SK-N-SH (cell line): ENCODE measurements at regions of chr18 and their contacts with region 1.

Region 1: DNA sequence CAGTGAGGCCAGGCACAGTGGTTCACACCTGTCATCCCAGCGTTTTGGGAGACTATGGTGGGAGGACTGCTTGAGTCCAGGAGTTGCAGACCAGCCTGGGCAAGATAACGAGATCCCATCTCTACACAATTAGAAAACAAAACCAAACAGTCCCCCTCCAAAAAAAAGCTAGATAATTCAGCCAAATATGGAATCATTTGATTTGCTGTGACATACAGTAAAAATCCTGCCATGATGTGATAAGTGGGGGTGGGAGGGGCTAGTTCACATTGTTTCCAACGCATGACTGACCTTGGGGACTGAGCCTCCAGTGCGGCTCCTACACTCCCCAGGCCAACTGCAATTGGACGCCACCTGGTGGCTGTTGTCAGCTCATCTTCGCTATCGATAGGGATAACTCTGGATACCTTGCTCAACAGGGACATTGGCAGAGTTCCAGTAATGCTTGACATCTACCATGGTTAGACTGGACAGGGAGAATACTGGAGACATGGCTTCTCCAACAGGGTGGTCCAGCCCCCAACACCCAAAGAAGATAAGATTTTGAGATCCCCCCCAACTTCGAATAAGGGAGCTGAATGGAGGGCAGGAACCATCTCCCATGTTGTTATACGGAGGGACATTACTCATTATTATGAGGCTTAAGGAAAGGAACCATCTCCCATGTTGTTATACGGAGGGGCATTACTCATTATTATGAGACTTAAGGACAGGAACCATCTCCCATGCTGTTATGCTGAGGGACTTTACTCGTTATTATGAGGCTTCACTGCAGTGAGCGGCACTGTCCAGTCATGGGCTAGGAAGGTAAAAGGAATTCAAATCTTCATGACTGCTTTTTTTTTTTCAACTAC is 135.9 kb downstream of the TGIF1 start:
- DNase-seq: peak; percentile 73
- H3K4me3 ChIP-seq: no peak overlapping the region
- H3K27ac ChIP-seq: peak overlapping the region in 1 of 2 experiments; percentile 24; a peak in 1 of 4 replicates
- H3K4me1 ChIP-seq: peaks cover 0 to 11% of the 10 kb centered on the region in 2 experiments; a peak in 1 of 4 replicates
- H3K27me3 ChIP-seq: no peaks in the 10 kb centered on the region
- CTCF ChIP-seq: peak; percentile 76
- EP300 ChIP-seq: no peak
- RAD21 ChIP-seq: peak; percentile 80

Region 2: GRCh38 chr18:3281456-3282400 is 304.2 kb before region 1 on chr18:
- CTCF ChIA-PET with region 1: interaction called, 21 read pairs
- POLR2A ChIA-PET with region 1: interaction called, 4 read pairs
- DNase-seq: peak; percentile 59
- H3K4me3 ChIP-seq: no peak overlapping the region; a peak in 1 of 4 replicates
- H3K27ac ChIP-seq: peak overlapping the region; percentile 30 to 53; a peak in 3 of 4 replicates
- H3K4me1 ChIP-seq: peaks cover 4 to 25% of the 10 kb centered on the region in 2 experiments; a peak in 3 of 4 replicates
- H3K27me3 ChIP-seq: no peaks in the 10 kb centered on the region
- CTCF ChIP-seq: peak; percentile 71
- EP300 ChIP-seq: no peak
- RAD21 ChIP-seq: peak; percentile 89

Region 3: GRCh38 chr18:3297025-3297984 is 288.6 kb before region 1 on chr18:
- CTCF ChIA-PET with region 1: interaction called, 22 read pairs
- POLR2A ChIA-PET with region 1: no interaction called
- DNase-seq: peak; percentile 75
- H3K4me3 ChIP-seq: peak overlapping the region; percentile 79 to 88
- H3K27ac ChIP-seq: peak overlapping the region; percentile 65 to 81
- H3K4me1 ChIP-seq: peaks cover 0 to 4% of the 10 kb centered on the region in 2 experiments; a peak in 1 of 4 replicates
- H3K27me3 ChIP-seq: no peaks in the 10 kb centered on the region
- CTCF ChIP-seq: peak; percentile 84
- EP300 ChIP-seq: no peak; a peak in 1 of 4 replicates
- RAD21 ChIP-seq: peak; percentile 47

Region 4: GRCh38 chr18:3447895-3448837 is 137.7 kb before region 1 on chr18:
- CTCF ChIA-PET with region 1: interaction called, 27 read pairs
- POLR2A ChIA-PET with region 1: no interaction called
- DNase-seq: peak; percentile 88
- H3K4me3 ChIP-seq: peak overlapping the region; percentile 74 to 93
- H3K27ac ChIP-seq: peak overlapping the region; percentile 98 to 99
- H3K4me1 ChIP-seq: peaks cover 15 to 20% of the 10 kb centered on the region in 2 experiments
- H3K27me3 ChIP-seq: no peaks in the 10 kb centered on the region
- CTCF ChIP-seq: peak; percentile 26
- EP300 ChIP-seq: peak; percentile 36 to 84; a peak in 3 of 4 replicates
- RAD21 ChIP-seq: no peak; the same call in none of the 2 replicates

Region 5: DNA sequence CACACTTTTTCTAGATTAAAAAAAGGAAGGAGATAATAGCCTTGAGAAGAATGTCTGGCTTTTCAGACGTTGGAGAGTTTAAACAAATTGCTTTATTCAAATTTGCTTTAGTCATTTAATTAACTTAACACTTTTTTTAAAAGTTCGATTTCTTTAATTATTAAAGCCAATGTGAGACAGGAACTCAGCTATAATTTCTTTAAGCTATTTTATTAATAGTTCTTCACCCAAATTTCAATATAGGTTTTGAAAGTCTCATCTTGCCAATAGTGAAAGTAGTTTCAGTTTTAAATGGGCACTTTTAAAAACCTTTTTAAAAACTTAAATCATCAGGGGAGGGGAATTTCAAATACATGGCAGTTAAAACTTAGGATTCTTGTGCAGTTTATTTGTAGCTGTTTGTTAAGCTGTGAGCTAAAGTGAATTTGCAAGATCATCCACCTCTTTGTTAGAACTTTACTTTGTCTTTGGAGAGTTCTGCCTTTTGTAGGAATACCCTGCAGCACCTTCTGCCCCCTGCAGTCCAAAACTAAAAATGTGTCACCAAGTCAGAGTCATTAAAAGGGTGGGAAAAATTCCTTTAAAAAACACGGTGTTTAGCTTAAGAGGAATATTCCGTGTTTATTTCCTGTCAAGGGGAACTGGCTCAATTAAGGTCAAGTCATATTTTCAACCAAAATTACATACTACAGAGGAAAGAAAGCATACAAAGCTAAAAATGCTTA is 131.4 kb before region 1 on chr18:
- CTCF ChIA-PET with region 1: interaction called, 27 read pairs
- POLR2A ChIA-PET with region 1: no interaction called
- DNase-seq: peak; percentile 51
- H3K4me3 ChIP-seq: peak overlapping the region; percentile 74 to 93
- H3K27ac ChIP-seq: peak overlapping the region; percentile 76 to 99
- H3K4me1 ChIP-seq: peaks cover 27 to 38% of the 10 kb centered on the region in 2 experiments; a peak in 3 of 4 replicates
- H3K27me3 ChIP-seq: no peaks in the 10 kb centered on the region
- CTCF ChIP-seq: peak; percentile 83
- EP300 ChIP-seq: no peak
- RAD21 ChIP-seq: peak; percentile 61

Region 6: GRCh38 chr18:3529601-3530000 is 56.3 kb before region 1 on chr18:
- CTCF ChIA-PET with region 1: interaction called, 20 read pairs
- POLR2A ChIA-PET with region 1: no interaction called
- DNase-seq: no peak
- H3K4me3 ChIP-seq: no peak overlapping the region
- H3K27ac ChIP-seq: peak overlapping the region in 1 of 2 experiments; percentile 0; a peak in 2 of 4 replicates
- H3K4me1 ChIP-seq: peaks cover 0 to 33% of the 10 kb centered on the region in 2 experiments; a peak in 2 of 4 replicates
- H3K27me3 ChIP-seq: no peaks in the 10 kb centered on the region
- CTCF ChIP-seq: no peak
- EP300 ChIP-seq: no peak
- RAD21 ChIP-seq: no peak

Region 7: DNA sequence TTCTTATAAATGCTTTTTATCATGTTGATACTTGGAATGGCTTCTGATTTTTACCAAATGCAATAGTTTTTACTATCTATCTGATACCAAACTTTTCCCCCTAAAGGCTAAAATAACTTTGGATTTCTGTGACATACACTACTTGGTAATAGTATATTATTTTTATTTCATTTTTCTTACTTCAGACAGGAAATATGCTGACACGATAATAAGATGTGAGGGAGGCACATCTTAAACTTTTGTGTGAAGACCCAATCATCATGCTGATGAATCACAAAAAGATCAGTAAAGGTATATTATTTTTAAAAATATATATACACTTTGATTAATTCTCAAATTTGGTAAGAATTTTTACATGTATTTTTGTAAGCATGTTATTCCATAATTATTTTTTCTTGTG is 13.1 kb before region 1 on chr18:
- CTCF ChIA-PET with region 1: interaction called, 21 read pairs
- POLR2A ChIA-PET with region 1: no interaction called
- DNase-seq: no peak
- H3K4me3 ChIP-seq: no peak overlapping the region
- H3K27ac ChIP-seq: no peak overlapping the region
- H3K4me1 ChIP-seq: peaks cover 0 to 2% of the 10 kb centered on the region in 2 experiments; a peak in 2 of 4 replicates
- H3K27me3 ChIP-seq: no peaks in the 10 kb centered on the region
- CTCF ChIP-seq: no peak
- EP300 ChIP-seq: no peak
- RAD21 ChIP-seq: no peak